ENCODE measurements at regions of chr9 and their contacts with region 1.

Region 1: GRCh38 chr9:131334629-131335367 is 45.3 kb downstream of the PLPP7 start:
- DNase-seq: no peak
- ATAC-seq: no peak; the same call in 2 of the 3 replicates
- H3K4me3 ChIP-seq: no peak overlapping the region
- H3K27ac ChIP-seq: no peak overlapping the region
- H3K4me1 ChIP-seq: no peaks in the 10 kb centered on the region
- H3K27me3 ChIP-seq: no peaks in the 10 kb centered on the region
- CTCF ChIP-seq: no peak
- EP300 ChIP-seq: no peak
- POLR2A ChIP-seq: no peak
- RAD21 ChIP-seq: no peak

Region 2: DNA sequence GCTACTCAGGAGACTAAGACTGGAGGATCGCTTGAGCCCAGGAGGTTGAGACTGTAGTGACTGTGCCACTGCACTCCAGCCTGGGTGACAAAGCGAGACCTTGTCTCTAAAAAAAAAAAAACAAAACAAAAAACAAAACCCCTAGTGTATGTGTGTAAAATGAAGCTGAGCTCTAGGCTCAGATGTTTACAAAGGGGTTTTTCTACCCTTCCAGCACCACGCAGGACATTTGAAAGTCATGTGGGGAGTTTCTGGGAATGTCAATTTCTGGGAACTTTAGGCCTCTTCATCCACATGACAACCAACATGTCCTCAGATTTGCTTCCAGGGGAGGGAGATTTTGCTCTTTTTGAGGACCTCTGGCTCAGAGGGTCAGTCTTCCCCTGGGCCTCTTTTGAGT is 280.9 kb before region 1 on chr9:
- CTCF ChIA-PET with region 1: interaction called, 59 read pairs
- POLR2A ChIA-PET with region 1: no interaction called
- RAD21 ChIA-PET with region 1: interaction called, 35 read pairs
- SMC1A ChIA-PET with region 1: interaction called, 7 read pairs
- in situ Hi-C with region 1: loop called (anchors 5 kb)
- intact Hi-C with region 1: loop called (anchors 1 kb)
- DNase-seq: no peak
- ATAC-seq: no peak
- H3K4me3 ChIP-seq: no peak overlapping the region
- H3K27ac ChIP-seq: no peak overlapping the region
- H3K4me1 ChIP-seq: no peaks in the 10 kb centered on the region
- H3K27me3 ChIP-seq: no peaks in the 10 kb centered on the region
- CTCF ChIP-seq: no peak
- EP300 ChIP-seq: no peak
- POLR2A ChIP-seq: no peak
- RAD21 ChIP-seq: no peak

Region 3: DNA sequence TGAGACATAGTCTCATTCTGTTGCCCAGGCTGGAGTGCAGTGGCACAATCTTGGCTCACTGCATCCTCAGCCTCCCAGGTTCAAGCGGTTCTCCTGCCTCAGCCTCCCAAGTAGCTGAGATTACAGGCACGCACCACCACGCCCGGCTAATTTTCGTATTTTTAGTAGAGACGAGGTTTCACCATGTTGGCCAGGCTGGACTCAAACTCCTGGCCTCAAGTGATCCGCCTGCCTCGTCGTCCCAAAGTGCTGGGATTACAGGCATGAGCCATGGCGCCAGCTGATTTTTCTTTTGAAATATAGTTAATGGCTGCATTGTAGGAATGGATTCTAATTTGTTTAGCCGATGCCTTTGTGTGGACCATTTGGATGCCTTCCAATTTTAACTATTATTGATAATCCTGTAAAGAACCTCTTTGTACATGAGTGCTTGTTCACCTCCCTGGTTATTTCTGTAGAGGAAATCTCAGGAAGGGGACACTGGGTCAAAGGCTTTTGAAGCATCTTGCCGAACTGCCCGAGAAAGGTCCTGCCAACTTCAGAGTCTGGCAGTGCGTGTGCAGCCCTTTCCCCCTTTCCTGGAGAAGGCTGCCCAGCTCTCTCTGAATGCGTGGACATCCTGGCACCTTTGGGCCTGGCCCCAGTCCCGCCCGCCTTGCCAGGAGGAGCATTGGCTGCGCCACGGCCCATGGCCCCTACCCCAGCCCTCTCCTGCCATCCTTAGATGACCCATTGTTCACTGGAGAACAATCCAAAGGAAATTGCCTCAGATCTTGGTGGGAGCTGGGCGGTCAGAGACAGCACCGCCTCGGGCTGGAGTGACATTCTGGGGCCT is 218.3 kb before region 1 on chr9:
- CTCF ChIA-PET with region 1: no interaction called
- POLR2A ChIA-PET with region 1: no interaction called
- RAD21 ChIA-PET with region 1: no interaction called
- SMC1A ChIA-PET with region 1: no interaction called
- in situ Hi-C with region 1: no loop called
- intact Hi-C with region 1: no loop called
- DNase-seq: no peak
- ATAC-seq: no peak
- H3K4me3 ChIP-seq: no peak overlapping the region
- H3K27ac ChIP-seq: no peak overlapping the region
- H3K4me1 ChIP-seq: no peaks in the 10 kb centered on the region
- H3K27me3 ChIP-seq: peaks cover 1 to 6% of the 10 kb centered on the region in 2 experiments; a peak in 2 of 4 replicates
- CTCF ChIP-seq: no peak
- EP300 ChIP-seq: no peak
- POLR2A ChIP-seq: no peak
- RAD21 ChIP-seq: no peak

Region 4: GRCh38 chr9:131237931-131238401 is 96.8 kb before region 1 on chr9:
- CTCF ChIA-PET with region 1: interaction called, 10 read pairs
- POLR2A ChIA-PET with region 1: no interaction called
- RAD21 ChIA-PET with region 1: no interaction called
- SMC1A ChIA-PET with region 1: interaction called, 3 read pairs
- in situ Hi-C with region 1: no loop called
- intact Hi-C with region 1: loop called (anchors 5 kb)
- DNase-seq: peak; percentile 76
- ATAC-seq: peak; percentile 99
- H3K4me3 ChIP-seq: peak overlapping the region; percentile 26; the same call in 1 of the 2 replicates
- H3K27ac ChIP-seq: peak overlapping the region; percentile 86
- H3K4me1 ChIP-seq: peaks cover 17% of the 10 kb centered on the region
- H3K27me3 ChIP-seq: no peaks in the 10 kb centered on the region
- CTCF ChIP-seq: no peak
- EP300 ChIP-seq: no peak
- POLR2A ChIP-seq: peak; percentile 86
- RAD21 ChIP-seq: 0 out of 2 replicates have a peak, but pooled peaks have one; percentile 7

Region 5: GRCh38 chr9:131253891-131254491 is 80.8 kb before region 1 on chr9:
- CTCF ChIA-PET with region 1: interaction called, 11 read pairs
- POLR2A ChIA-PET with region 1: no interaction called
- RAD21 ChIA-PET with region 1: interaction called, 6 read pairs
- SMC1A ChIA-PET with region 1: interaction called, 5 read pairs
- in situ Hi-C with region 1: no loop called
- intact Hi-C with region 1: no loop called
- DNase-seq: no peak
- ATAC-seq: peak; percentile 4
- H3K4me3 ChIP-seq: no peak overlapping the region
- H3K27ac ChIP-seq: peak overlapping the region; percentile 78
- H3K4me1 ChIP-seq: peaks cover 48% of the 10 kb centered on the region
- H3K27me3 ChIP-seq: no peaks in the 10 kb centered on the region
- CTCF ChIP-seq: no peak
- EP300 ChIP-seq: no peak
- POLR2A ChIP-seq: peak; percentile 65
- RAD21 ChIP-seq: no peak

Region 6: GRCh38 chr9:131277910-131278701 is 56.7 kb before region 1 on chr9:
- CTCF ChIA-PET with region 1: interaction called, 10 read pairs
- POLR2A ChIA-PET with region 1: no interaction called
- RAD21 ChIA-PET with region 1: interaction called, 5 read pairs
- SMC1A ChIA-PET with region 1: interaction called, 3 read pairs
- in situ Hi-C with region 1: no loop called
- intact Hi-C with region 1: loop called (anchors 2 kb)
- DNase-seq: no peak
- ATAC-seq: peak; percentile 37
- H3K4me3 ChIP-seq: peak overlapping the region; percentile 99; the same call in 1 of the 2 replicates
- H3K27ac ChIP-seq: no peak overlapping the region
- H3K4me1 ChIP-seq: peaks cover 9% of the 10 kb centered on the region; the same call in 1 of the 2 replicates
- H3K27me3 ChIP-seq: peaks cover 5 to 6% of the 10 kb centered on the region in 2 experiments; a peak in 3 of 4 replicates
- CTCF ChIP-seq: no peak
- EP300 ChIP-seq: no peak
- POLR2A ChIP-seq: peak; percentile 26; the same call in 1 of the 2 replicates
- RAD21 ChIP-seq: no peak

Region 7: DNA sequence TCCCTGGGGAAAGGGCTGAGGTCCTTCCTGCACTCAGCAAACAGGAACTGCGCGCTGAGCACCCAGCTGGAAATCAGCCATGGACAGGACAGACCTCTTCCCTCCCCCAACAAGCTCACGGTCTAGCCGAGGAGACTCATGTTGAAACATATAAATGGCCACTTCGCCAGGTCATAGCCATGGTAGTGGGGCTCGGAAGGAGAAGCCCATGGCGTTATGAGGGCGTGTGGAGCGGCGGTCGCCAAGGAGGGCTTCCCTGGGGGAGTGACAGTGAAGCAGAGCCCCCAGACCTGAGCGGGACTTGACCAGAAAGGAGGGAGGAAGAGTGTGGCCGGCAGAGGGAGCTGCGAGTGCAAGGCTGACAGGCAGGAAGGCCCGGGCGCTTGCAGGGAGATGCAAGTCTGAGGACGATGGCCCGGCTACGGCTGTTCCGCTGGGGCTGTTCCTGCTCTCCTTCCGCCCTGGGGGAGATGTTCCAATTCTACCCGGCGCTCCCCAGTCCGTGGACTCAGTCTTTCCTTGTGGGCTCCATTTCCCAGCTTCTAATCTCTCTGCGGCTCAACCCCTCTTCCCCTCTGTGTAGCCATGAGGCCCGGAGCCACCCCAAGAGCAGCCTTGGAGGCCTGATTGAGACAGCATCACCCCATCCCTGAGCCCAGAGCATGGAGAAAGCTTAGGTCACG is 15.2 kb after region 1 on chr9:
- CTCF ChIA-PET with region 1: interaction called, 5 read pairs
- POLR2A ChIA-PET with region 1: no interaction called
- RAD21 ChIA-PET with region 1: no interaction called
- SMC1A ChIA-PET with region 1: interaction called, 10 read pairs
- in situ Hi-C with region 1: no loop called
- intact Hi-C with region 1: no loop called
- DNase-seq: no peak
- ATAC-seq: peak; percentile 100
- H3K4me3 ChIP-seq: no peak overlapping the region
- H3K27ac ChIP-seq: no peak overlapping the region
- H3K4me1 ChIP-seq: no peaks in the 10 kb centered on the region
- H3K27me3 ChIP-seq: no peaks in the 10 kb centered on the region
- CTCF ChIP-seq: peak; percentile 85 to 91 (median 88)
- EP300 ChIP-seq: no peak
- POLR2A ChIP-seq: no peak
- RAD21 ChIP-seq: peak; percentile 87

Region 8: DNA sequence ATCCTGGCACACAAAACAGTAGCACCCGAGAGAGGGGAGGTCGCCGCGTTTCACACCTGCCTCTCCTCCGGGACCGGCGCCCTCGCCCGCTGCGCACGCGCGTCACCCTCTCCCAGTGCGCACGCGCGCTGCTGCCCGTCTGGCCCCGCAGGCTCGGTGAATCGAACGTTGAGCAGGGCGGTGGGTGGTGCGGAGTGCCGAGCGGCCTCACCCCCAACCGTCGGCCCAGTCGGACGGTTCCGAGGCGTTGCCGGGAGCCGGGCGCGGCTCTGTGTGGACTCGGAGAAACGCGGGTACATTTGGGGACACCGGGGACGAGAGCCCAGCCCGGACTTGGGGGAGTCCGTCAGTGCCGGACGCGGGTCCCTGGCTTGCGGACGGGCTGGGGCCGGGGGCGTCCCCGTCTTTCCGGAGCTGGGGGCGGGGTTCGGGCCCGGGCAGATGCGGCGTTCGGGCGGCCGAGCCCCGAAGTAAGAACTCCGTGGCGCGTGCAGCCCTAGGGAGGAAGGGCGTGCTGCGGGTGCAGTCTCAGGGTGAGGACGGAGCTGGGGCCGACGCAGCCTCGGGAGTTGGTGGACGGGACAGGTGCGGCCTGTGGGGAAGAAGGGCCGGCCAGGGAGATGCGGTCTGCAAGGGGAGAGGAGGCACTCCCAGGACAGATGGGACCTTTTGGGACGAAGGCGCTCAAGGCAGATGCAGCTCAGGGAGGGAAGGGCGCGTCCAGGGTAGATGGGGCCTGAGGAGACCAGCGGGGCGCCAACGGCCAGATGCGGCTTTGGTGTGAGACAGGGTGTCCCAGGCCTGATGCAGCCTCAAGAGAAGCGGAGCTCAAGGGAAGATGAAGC is 168.2 kb after region 1 on chr9 and contains the start of gene POMT1:
- CTCF ChIA-PET with region 1: no interaction called
- POLR2A ChIA-PET with region 1: no interaction called
- RAD21 ChIA-PET with region 1: no interaction called
- SMC1A ChIA-PET with region 1: no interaction called
- in situ Hi-C with region 1: no loop called
- intact Hi-C with region 1: no loop called
- DNase-seq: peak; percentile 59
- ATAC-seq: peak; percentile 90
- H3K4me3 ChIP-seq: peak within 1 kb of the TSS; percentile 90
- H3K27ac ChIP-seq: peak within 1 kb of the TSS; percentile 50; the same call in 1 of the 2 replicates
- H3K4me1 ChIP-seq: peaks cover 8% of the 10 kb centered on the region
- H3K27me3 ChIP-seq: no peaks in the 10 kb centered on the region
- CTCF ChIP-seq: no peak
- EP300 ChIP-seq: no peak
- POLR2A ChIP-seq: peak; percentile 84
- RAD21 ChIP-seq: no peak
- polyA plus RNA-seq, gene POMT1: 1.2 to 2.2 TPM

Region 9: GRCh38 chr9:132216861-132217619 is 882.2 kb after region 1 on chr9:
- CTCF ChIA-PET with region 1: no interaction called
- POLR2A ChIA-PET with region 1: no interaction called
- RAD21 ChIA-PET with region 1: no interaction called
- SMC1A ChIA-PET with region 1: no interaction called
- in situ Hi-C with region 1: no loop called
- intact Hi-C with region 1: no loop called
- DNase-seq: no peak
- ATAC-seq: no peak
- H3K4me3 ChIP-seq: no peak overlapping the region
- H3K27ac ChIP-seq: no peak overlapping the region
- H3K4me1 ChIP-seq: no peaks in the 10 kb centered on the region
- H3K27me3 ChIP-seq: peaks cover 7 to 8% of the 10 kb centered on the region in 2 experiments; a peak in 3 of 4 replicates
- CTCF ChIP-seq: no peak
- EP300 ChIP-seq: no peak
- POLR2A ChIP-seq: no peak
- RAD21 ChIP-seq: no peak